ENCODE measurements at regions of chr13 and their contacts with region 1.

Region 1: GRCh38 chr13:49976314-49977258 is 20.3 kb upstream of the TRIM13 start:
- DNase-seq: peak; percentile 30 to 48
- ATAC-seq: peak; percentile 82 to 88
- H3K4me3 ChIP-seq: no peak overlapping the region
- H3K27ac ChIP-seq: no peak overlapping the region
- H3K4me1 ChIP-seq: peaks cover 0 to 4% of the 10 kb centered on the region in 2 donors
- H3K27me3 ChIP-seq: no peaks in the 10 kb centered on the region
- CTCF ChIP-seq: peak; percentile 75 to 91 (median 88)
- POLR2A ChIP-seq: no peak

Region 2: GRCh38 chr13:50539791-50540530 is 563.4 kb after region 1 on chr13:
- in situ Hi-C with region 1: loop called in 1 of 4 experiments (anchors 5 kb)
- intact Hi-C with region 1: no loop called
- DNase-seq: no peak
- ATAC-seq: no peak
- H3K4me3 ChIP-seq: no peak overlapping the region
- H3K27ac ChIP-seq: no peak overlapping the region
- H3K4me1 ChIP-seq: peaks cover 7 to 13% of the 10 kb centered on the region in 2 donors
- H3K27me3 ChIP-seq: no peaks in the 10 kb centered on the region
- CTCF ChIP-seq: no peak
- POLR2A ChIP-seq: no peak

Region 3: DNA sequence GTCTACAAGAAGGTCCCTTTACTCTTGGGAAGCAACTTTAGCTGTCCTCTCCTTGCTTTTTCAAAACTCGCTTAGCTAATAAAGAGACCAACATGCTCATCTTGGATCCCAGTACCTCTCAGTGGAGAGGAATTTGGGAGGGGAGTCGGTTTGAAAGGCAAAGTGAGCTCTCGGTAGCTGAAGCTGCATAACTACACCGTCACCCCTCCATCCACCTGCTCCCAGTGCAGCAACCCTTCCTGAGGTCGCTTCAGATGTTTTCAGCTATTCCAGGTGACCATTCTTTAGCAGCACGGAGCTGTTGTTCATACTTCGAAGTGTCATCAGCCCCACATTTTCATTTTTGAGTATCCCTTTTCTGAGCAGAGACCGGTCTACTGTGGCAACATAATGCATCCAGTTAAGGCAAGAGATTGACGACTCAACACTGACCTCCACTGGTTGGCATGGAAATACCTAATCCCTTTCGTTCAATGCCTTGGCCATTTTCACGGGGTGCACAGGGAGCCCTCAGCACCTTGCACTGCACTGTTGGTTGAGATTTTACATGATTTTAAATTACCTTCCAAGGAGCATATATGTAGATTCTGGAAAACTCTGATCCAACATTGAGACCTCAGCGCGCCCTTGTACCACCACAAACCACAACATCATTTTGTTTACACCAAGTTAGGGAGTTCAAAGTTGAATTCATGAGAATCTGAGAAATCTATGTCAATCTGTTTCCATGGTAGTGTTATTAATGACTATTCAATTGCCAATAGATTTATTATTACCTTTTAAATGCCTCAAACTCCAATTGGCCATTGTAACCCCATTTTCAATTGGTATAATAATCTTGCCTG is 824.7 kb after region 1 on chr13:
- in situ Hi-C with region 1: loop called (anchors 10 to 25 kb)
- intact Hi-C with region 1: loop called (anchors 2 kb)
- DNase-seq: peak; percentile 6 to 20
- ATAC-seq: peak; percentile 75 to 95
- H3K4me3 ChIP-seq: no peak overlapping the region
- H3K27ac ChIP-seq: no peak overlapping the region
- H3K4me1 ChIP-seq: peaks cover 5 to 15% of the 10 kb centered on the region in 2 donors
- H3K27me3 ChIP-seq: no peaks in the 10 kb centered on the region
- CTCF ChIP-seq: peak; percentile 39 to 69 (median 64)
- POLR2A ChIP-seq: no peak

Region 4: DNA sequence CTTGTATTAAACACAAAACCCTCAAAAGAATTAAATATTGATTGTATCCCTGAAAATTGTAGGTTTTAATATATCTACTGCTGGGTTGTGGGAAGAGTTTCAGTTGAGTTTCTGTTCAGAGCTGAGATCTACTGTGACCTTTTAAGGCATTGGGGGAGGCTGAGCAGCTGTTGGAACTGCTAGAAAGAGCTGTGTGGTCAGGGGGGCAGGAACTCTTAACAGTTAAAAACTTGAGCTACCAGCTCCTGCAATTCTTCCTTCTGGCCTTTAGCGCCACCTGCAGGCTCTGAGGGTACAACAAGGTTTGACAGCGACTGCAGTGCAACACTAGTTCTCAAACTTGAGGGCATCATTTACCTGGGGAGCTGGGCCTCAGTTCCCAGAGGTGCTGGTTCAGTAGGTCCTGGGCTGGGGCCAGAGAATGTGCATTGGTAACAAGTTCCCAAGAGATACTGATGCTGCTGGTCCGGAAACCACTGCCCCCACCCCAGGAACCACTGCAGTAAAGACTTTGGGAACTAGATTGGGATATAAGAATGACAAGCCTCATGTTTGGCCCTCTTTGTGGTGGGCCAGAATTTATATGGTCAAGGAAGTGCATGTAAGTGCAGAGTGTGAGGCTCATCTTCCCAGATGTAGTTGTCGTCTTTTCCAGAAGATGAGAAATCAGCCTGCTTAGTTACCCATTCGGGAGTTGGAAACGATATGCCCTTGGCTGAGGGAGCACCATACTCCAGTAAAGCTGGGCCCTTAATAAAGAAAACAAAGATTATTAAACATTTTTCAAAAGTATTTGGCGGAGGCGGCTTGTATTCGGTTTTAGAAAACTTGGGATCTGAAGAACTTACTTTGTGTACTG is 935.6 kb after region 1 on chr13:
- in situ Hi-C with region 1: loop called (anchors 10 to 25 kb)
- intact Hi-C with region 1: loop called (anchors 2 kb)
- DNase-seq: peak; percentile 52 to 71
- ATAC-seq: peak; percentile 25 to 43
- H3K4me3 ChIP-seq: no peak overlapping the region
- H3K27ac ChIP-seq: no peak overlapping the region
- H3K4me1 ChIP-seq: peaks cover 14 to 15% of the 10 kb centered on the region in 2 donors
- H3K27me3 ChIP-seq: no peaks in the 10 kb centered on the region
- CTCF ChIP-seq: peak; percentile 49 to 89 (median 71)
- POLR2A ChIP-seq: no peak

Region 5: GRCh38 chr13:51025245-51025905 is 1048.8 kb after region 1 on chr13:
- in situ Hi-C with region 1: no loop called
- intact Hi-C with region 1: no loop called
- DNase-seq: no peak
- ATAC-seq: no peak
- H3K4me3 ChIP-seq: no peak overlapping the region
- H3K27ac ChIP-seq: no peak overlapping the region
- H3K4me1 ChIP-seq: no peaks in the 10 kb centered on the region
- H3K27me3 ChIP-seq: no peaks in the 10 kb centered on the region
- CTCF ChIP-seq: no peak
- POLR2A ChIP-seq: no peak

Region 6: GRCh38 chr13:51070005-51070649 is 1093.5 kb after region 1 on chr13:
- in situ Hi-C with region 1: loop called in 1 of 4 experiments (anchors 25 kb)
- intact Hi-C with region 1: loop called (anchors 10 kb)
- DNase-seq: peak; percentile 32 to 51
- ATAC-seq: peak; percentile 60 to 79
- H3K4me3 ChIP-seq: no peak overlapping the region
- H3K27ac ChIP-seq: no peak overlapping the region
- H3K4me1 ChIP-seq: no peaks in the 10 kb centered on the region
- H3K27me3 ChIP-seq: no peaks in the 10 kb centered on the region
- CTCF ChIP-seq: peak; percentile 56 to 90 (median 78)
- POLR2A ChIP-seq: no peak